HEK293 (cell line): ENCODE measurements at regions of chr6 and their contacts with region 1.

Region 1: GRCh38 chr6:132259070-132259469 is 142.2 kb downstream of the MOXD1 start:
- H3K4me3 ChIP-seq: no peak overlapping the region
- H3K27ac ChIP-seq: no peak overlapping the region
- H3K4me1 ChIP-seq: no peaks in the 10 kb centered on the region
- CTCF ChIP-seq: peak; percentile 33; the same call in 1 of the 2 replicates

Region 2: GRCh38 chr6:131909408-131910218 is 349.5 kb before region 1 on chr6:
- CTCF ChIA-PET with region 1: interaction called, 17 read pairs
- POLR2A ChIA-PET with region 1: no interaction called
- H3K4me3 ChIP-seq: no peak overlapping the region
- H3K27ac ChIP-seq: no peak overlapping the region
- H3K4me1 ChIP-seq: no peaks in the 10 kb centered on the region
- CTCF ChIP-seq: peak; percentile 26; the same call in 1 of the 2 replicates

Region 3: DNA sequence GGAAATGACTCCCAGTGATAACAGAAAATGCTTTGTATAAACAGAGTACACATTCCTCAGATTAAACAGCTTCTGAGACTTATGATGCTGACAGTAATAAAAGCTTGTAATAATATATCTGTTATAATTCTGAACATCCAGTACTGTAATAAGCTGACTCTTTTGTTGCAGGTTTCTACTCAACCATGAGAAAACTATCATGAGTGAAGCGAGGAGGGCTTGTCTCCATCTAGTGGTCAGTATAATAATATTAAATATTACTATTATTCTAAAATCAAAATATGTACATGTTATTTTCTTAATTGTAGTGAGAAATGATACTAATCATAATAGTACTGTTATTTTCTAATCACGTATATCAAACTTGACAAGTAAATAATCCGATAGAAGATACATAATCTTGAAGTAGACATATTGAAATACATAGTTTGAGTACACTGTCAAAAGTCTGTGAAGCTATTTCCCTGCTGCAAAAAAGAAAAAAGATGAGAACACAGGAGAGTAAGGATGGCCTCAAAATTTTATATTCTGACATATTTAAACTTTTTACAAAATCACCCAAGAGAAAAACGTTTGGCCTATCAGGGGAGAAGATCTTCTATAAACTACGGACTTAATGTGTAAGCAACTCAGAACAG is 40.9 kb before region 1 on chr6:
- CTCF ChIA-PET with region 1: interaction called, 11 read pairs
- POLR2A ChIA-PET with region 1: no interaction called
- H3K4me3 ChIP-seq: no peak overlapping the region
- H3K27ac ChIP-seq: no peak overlapping the region
- H3K4me1 ChIP-seq: no peaks in the 10 kb centered on the region
- CTCF ChIP-seq: no peak

Region 4: GRCh38 chr6:132270726-132271402 is 11.8 kb after region 1 on chr6:
- CTCF ChIA-PET with region 1: interaction called, 13 read pairs
- POLR2A ChIA-PET with region 1: no interaction called
- H3K4me3 ChIP-seq: no peak overlapping the region
- H3K27ac ChIP-seq: no peak overlapping the region
- H3K4me1 ChIP-seq: no peaks in the 10 kb centered on the region
- CTCF ChIP-seq: no peak

Region 5: GRCh38 chr6:132365281-132365907 is 106.3 kb after region 1 on chr6:
- CTCF ChIA-PET with region 1: no interaction called
- POLR2A ChIA-PET with region 1: no interaction called
- H3K4me3 ChIP-seq: no peak overlapping the region
- H3K27ac ChIP-seq: no peak overlapping the region
- H3K4me1 ChIP-seq: 0 out of 2 replicates have a peak, but pooled peaks cover 8% of the 10 kb centered on the region
- CTCF ChIP-seq: no peak

Region 6: DNA sequence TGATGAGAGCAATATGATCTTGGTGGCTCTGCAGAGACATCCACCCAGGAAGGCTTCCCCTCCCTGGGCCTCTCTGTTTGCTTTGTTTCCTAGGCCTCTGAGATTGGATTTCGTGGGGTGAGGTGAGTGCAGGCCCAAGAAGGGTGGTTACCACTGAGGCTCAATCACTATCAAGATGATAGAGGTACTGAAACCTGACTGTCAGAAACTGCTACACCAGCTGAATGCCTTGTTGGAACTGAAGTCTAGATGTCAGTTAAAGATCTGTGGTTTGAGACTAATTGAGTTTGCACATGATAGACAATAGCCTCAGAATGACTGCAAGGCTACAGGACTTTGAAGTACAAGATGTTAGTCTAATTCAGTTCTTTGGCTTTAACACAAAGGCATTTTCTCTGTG is 439.5 kb after region 1 on chr6:
- CTCF ChIA-PET with region 1: no interaction called
- POLR2A ChIA-PET with region 1: no interaction called
- H3K4me3 ChIP-seq: no peak overlapping the region
- H3K27ac ChIP-seq: no peak overlapping the region
- H3K4me1 ChIP-seq: no peaks in the 10 kb centered on the region
- CTCF ChIP-seq: no peak